ENCODE measurements at regions of chr22 and their contacts with region 1.

Region 1: GRCh38 chr22:28009272-28009827 is 90.3 kb upstream of the PITPNB start:
- DNase-seq: peak; percentile 70 to 85
- ATAC-seq: peak; percentile 80 to 93 (median 87)
- H3K4me3 ChIP-seq: no peak overlapping the region
- H3K27ac ChIP-seq: no peak overlapping the region
- H3K4me1 ChIP-seq: no peaks in the 10 kb centered on the region
- H3K27me3 ChIP-seq: no peaks in the 10 kb centered on the region
- CTCF ChIP-seq: peak; percentile 96

Region 2: DNA sequence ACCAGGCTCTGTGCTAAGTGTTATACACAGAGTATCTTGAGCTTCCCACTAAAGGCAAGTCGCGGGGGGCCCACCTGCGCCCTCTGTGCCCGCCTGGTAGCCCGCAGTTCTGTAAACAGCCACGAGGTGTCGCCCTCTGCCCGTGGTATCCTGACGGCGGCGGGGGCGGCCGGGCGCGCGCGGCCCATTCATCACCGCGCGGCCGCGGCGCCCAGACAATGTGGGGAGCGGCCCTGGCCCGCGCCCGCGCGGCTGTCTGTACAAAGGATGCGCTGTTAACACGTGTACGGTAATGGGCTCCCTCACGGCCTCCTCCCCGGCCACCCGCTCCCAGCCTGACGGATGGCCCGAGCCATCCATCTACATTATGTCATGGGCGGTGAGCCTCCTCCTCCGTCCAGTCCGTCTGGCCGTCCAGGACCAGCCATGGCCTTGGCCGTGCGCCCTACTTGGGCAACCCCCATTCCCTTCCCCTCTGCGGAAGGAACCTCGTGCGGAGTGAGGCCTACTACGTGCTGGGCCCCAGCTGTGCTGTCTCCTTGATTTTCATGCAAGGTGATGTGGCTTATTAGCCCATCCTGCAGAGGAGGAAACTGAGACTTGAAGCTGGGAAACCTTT is 1252.6 kb before region 1 on chr22:
- intact Hi-C with region 1: loop called in 1 of 2 experiments (anchors 10 kb)
- DNase-seq: peak; percentile 66 to 68
- ATAC-seq: peak; percentile 77 to 92 (median 87)
- H3K4me3 ChIP-seq: peak overlapping the region; percentile 54
- H3K27ac ChIP-seq: no peak overlapping the region
- H3K4me1 ChIP-seq: no peaks in the 10 kb centered on the region
- H3K27me3 ChIP-seq: no peaks in the 10 kb centered on the region
- CTCF ChIP-seq: peak; percentile 99

Region 3: GRCh38 chr22:27405672-27406388 is 603.5 kb before region 1 on chr22:
- intact Hi-C with region 1: loop called in 1 of 2 experiments (anchors 10 kb)
- DNase-seq: peak; percentile 65 to 78
- ATAC-seq: peak; percentile 83 to 94 (median 88)
- H3K4me3 ChIP-seq: no peak overlapping the region
- H3K27ac ChIP-seq: no peak overlapping the region
- H3K4me1 ChIP-seq: no peaks in the 10 kb centered on the region
- H3K27me3 ChIP-seq: peaks cover 0 to 7% (median 0%) of the 10 kb centered on the region in 3 donors
- CTCF ChIP-seq: peak; percentile 78

Region 4: GRCh38 chr22:27885977-27886842 is 123.1 kb before region 1 on chr22:
- intact Hi-C with region 1: loop called (anchors 2 kb)
- DNase-seq: no peak
- ATAC-seq: peak in 3 of 4 donors; percentile 42 to 75 (median 57)
- H3K4me3 ChIP-seq: no peak overlapping the region
- H3K27ac ChIP-seq: no peak overlapping the region
- H3K4me1 ChIP-seq: peaks cover 22% of the 10 kb centered on the region
- H3K27me3 ChIP-seq: no peaks in the 10 kb centered on the region
- CTCF ChIP-seq: peak; percentile 87

Measured in psoas muscle (tissue), 8 donors.